Sigmoid colon (tissue), 7 donors: ENCODE measurements at regions of chr9 and their contacts with region 1.

Region 1: GRCh38 chr9:113523421-113524236 is 60.1 kb downstream of the RGS3 start:
- DNase-seq: no peak
- H3K4me3 ChIP-seq: peak overlapping the region in 2 of 4 donors; percentile 4 to 8
- H3K27ac ChIP-seq: peak overlapping the region; percentile 61 to 83 (median 78)
- H3K4me1 ChIP-seq: peaks cover 0 to 88% (median 78%) of the 10 kb centered on the region in 4 donors
- H3K27me3 ChIP-seq: no peaks in the 10 kb centered on the region
- CTCF ChIP-seq: no peak
- EP300 ChIP-seq: no peak
- POLR2A ChIP-seq: peak in 1 of 2 donors; percentile 31

Region 2: GRCh38 chr9:113463418-113464285 is 60.0 kb before region 1 on chr9 and contains the start of gene RGS3:
- intact Hi-C with region 1: loop called (anchors 5 kb)
- DNase-seq: peak; percentile 84
- H3K4me3 ChIP-seq: peak within 1 kb of the TSS; percentile 41 to 65 (median 60)
- H3K27ac ChIP-seq: peak within 1 kb of the TSS; percentile 79 to 86 (median 82)
- H3K4me1 ChIP-seq: peaks cover 0 to 37% (median 21%) of the 10 kb centered on the region in 4 donors
- H3K27me3 ChIP-seq: no peaks in the 10 kb centered on the region
- CTCF ChIP-seq: no peak
- EP300 ChIP-seq: no peak
- POLR2A ChIP-seq: peak; percentile 29 to 64
- total RNA-seq, gene RGS3: 26.9 to 50.7 (median 42.0) TPM

Region 3: GRCh38 chr9:113488490-113488889 is 35.1 kb before region 1 on chr9:
- intact Hi-C with region 1: loop called (anchors 5 kb)
- DNase-seq: peak; percentile 69
- H3K4me3 ChIP-seq: no peak overlapping the region
- H3K27ac ChIP-seq: peak overlapping the region; percentile 66 to 79 (median 72)
- H3K4me1 ChIP-seq: peaks cover 0 to 62% (median 52%) of the 10 kb centered on the region in 4 donors
- H3K27me3 ChIP-seq: no peaks in the 10 kb centered on the region
- CTCF ChIP-seq: no peak
- EP300 ChIP-seq: peak in 3 of 4 donors; percentile 12 to 67 (median 22)
- POLR2A ChIP-seq: no peak

Region 4: GRCh38 chr9:113564498-113565237 is 41.0 kb after region 1 on chr9:
- intact Hi-C with region 1: loop called (anchors 5 kb)
- DNase-seq: peak; percentile 87
- H3K4me3 ChIP-seq: peak overlapping the region; percentile 33 to 50 (median 48)
- H3K27ac ChIP-seq: peak overlapping the region; percentile 84 to 89 (median 86)
- H3K4me1 ChIP-seq: peaks cover 0 to 68% (median 57%) of the 10 kb centered on the region in 4 donors
- H3K27me3 ChIP-seq: no peaks in the 10 kb centered on the region
- CTCF ChIP-seq: no peak
- EP300 ChIP-seq: no peak
- POLR2A ChIP-seq: peak; percentile 52 to 62

Region 5: DNA sequence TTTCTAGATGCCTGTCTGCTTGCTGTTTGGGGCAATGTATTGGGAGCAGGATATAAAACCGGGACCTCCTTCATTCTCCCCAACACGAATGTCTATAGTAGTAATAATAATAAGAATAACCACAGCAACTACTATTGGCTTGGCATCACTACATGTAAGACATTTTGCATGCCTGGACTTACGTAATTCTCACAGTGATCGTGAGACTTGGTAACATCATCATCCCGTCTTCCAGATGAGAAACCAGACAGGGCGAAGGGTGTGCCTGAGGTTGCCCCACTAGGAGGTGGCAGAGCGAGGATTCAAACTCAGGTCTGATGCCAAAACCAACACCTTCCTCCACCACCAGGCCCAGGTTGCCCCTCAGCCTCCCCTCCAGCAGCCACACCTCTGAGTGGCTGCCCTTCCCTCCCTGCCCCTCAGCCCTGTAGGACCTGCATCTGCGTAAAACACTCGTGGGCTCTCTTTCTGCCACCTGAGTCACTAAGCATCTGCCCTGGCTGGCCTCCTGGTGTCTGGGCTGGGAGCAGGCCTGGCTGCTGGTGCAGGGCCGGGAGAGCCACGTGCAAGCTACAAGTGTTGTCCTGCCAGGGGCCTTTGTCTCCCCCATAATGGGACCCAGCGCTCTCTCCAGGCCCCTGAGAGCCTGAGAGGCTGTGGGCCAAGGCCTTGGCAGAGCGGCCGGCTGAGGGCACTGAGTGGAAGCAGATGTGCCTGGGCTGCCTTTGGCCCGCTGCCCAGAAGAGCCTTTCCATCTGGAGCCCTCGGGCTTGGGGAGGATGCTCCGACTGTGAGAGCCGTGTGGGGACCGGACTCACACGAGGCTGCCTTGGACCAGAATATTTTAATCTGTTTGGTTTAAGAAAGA is 125.2 kb after region 1 on chr9:
- intact Hi-C with region 1: loop called (anchors 5 kb)
- DNase-seq: peak; percentile 94
- H3K4me3 ChIP-seq: no peak overlapping the region
- H3K27ac ChIP-seq: peak overlapping the region; percentile 1 to 81 (median 72)
- H3K4me1 ChIP-seq: peaks cover 0 to 20% (median 13%) of the 10 kb centered on the region in 4 donors
- H3K27me3 ChIP-seq: no peaks in the 10 kb centered on the region
- CTCF ChIP-seq: no peak
- EP300 ChIP-seq: peak in 1 of 4 donors; percentile 37
- POLR2A ChIP-seq: no peak